ENCODE measurements at regions of chr1 and their contacts with region 1.

Region 1: GRCh38 chr1:153478692-153479618 is 18.5 kb upstream of the S100A7 start:
- DNase-seq: no peak
- ATAC-seq: no peak
- H3K4me3 ChIP-seq: no peak overlapping the region
- H3K4me3 Mint-ChIP-seq: no peak overlapping the region
- H3K27ac ChIP-seq: no peak overlapping the region
- H3K27ac Mint-ChIP-seq: no peak overlapping the region
- H3K4me1 ChIP-seq: no peaks in the 10 kb centered on the region
- H3K4me1 Mint-ChIP-seq: no peaks in the 10 kb centered on the region
- H3K27me3 ChIP-seq: no peaks in the 10 kb centered on the region
- H3K27me3 Mint-ChIP-seq: peaks cover 30% of the 10 kb centered on the region
- CTCF ChIP-seq: no peak

Region 2: DNA sequence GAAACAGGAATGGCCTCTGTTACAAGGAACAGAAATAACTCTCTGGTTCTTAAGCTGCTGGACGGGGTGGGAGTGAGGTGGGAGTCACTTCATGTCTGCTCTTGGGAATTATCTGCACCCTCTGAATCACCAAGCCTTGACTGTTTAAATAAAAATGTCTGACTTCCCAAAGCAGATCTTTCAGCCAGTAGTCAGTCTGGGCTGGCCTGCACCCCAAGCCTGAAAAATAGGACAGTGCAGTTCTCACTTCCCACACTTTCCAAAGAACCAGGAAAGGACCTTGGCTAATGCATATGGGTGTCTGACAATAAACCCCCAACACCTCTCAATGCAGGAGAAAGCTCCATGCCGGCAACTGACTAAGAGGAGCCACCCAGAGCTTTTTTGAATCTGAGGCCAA is 19.3 kb before region 1 on chr1:
- CTCF ChIA-PET with region 1: no interaction called
- POLR2A ChIA-PET with region 1: no interaction called
- intact Hi-C with region 1: no loop called
- DNase-seq: no peak
- ATAC-seq: no peak
- H3K4me3 ChIP-seq: no peak overlapping the region
- H3K4me3 Mint-ChIP-seq: no peak overlapping the region
- H3K27ac ChIP-seq: no peak overlapping the region
- H3K27ac Mint-ChIP-seq: no peak overlapping the region
- H3K4me1 ChIP-seq: no peaks in the 10 kb centered on the region
- H3K4me1 Mint-ChIP-seq: no peaks in the 10 kb centered on the region
- H3K27me3 ChIP-seq: no peaks in the 10 kb centered on the region
- H3K27me3 Mint-ChIP-seq: peaks cover 39% of the 10 kb centered on the region
- CTCF ChIP-seq: no peak

Region 3: GRCh38 chr1:153494976-153495535 is 16.1 kb after region 1 on chr1:
- CTCF ChIA-PET with region 1: interaction called, 36 read pairs
- POLR2A ChIA-PET with region 1: no interaction called
- intact Hi-C with region 1: no loop called
- DNase-seq: peak; percentile 46 to 81 (median 72)
- ATAC-seq: peak; percentile 68
- H3K4me3 ChIP-seq: no peak overlapping the region
- H3K4me3 Mint-ChIP-seq: no peak overlapping the region
- H3K27ac ChIP-seq: no peak overlapping the region
- H3K27ac Mint-ChIP-seq: no peak overlapping the region
- H3K4me1 ChIP-seq: no peaks in the 10 kb centered on the region
- H3K4me1 Mint-ChIP-seq: no peaks in the 10 kb centered on the region
- H3K27me3 ChIP-seq: peaks cover 4 to 5% of the 10 kb centered on the region in 2 experiments
- H3K27me3 Mint-ChIP-seq: peaks cover 28% of the 10 kb centered on the region
- CTCF ChIP-seq: peak; percentile 91

Region 4: DNA sequence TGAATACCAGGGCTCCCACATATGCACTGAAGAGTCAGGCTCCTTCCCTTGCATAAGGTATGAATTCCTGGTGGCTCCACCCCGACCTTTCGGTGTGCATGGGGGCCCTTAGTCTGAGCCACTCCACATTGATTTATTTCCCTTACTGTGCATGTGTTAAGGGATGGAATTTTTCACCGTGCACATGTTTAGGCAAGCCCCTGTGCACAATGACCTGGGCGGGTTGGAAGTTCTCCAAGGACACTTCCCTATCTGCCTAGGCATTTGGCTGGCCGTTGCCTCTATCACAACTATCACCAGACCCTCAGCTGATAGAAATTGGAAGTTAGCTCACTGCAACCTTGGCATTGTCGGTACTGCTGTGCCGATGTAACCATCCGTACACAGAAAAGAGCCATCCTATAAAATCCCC is 47.2 kb after region 1 on chr1:
- CTCF ChIA-PET with region 1: no interaction called
- POLR2A ChIA-PET with region 1: no interaction called
- intact Hi-C with region 1: no loop called
- DNase-seq: no peak
- ATAC-seq: no peak
- H3K4me3 ChIP-seq: no peak overlapping the region
- H3K4me3 Mint-ChIP-seq: no peak overlapping the region
- H3K27ac ChIP-seq: no peak overlapping the region
- H3K27ac Mint-ChIP-seq: no peak overlapping the region
- H3K4me1 ChIP-seq: peaks cover 5% of the 10 kb centered on the region
- H3K4me1 Mint-ChIP-seq: peaks cover 8% of the 10 kb centered on the region
- H3K27me3 ChIP-seq: no peaks in the 10 kb centered on the region
- H3K27me3 Mint-ChIP-seq: no peaks in the 10 kb centered on the region
- CTCF ChIP-seq: no peak

Region 5: GRCh38 chr1:153742411-153743142 is 263.6 kb after region 1 on chr1:
- CTCF ChIA-PET with region 1: no interaction called
- POLR2A ChIA-PET with region 1: no interaction called
- intact Hi-C with region 1: no loop called
- DNase-seq: no peak
- ATAC-seq: no peak
- H3K4me3 ChIP-seq: no peak overlapping the region
- H3K4me3 Mint-ChIP-seq: no peak overlapping the region
- H3K27ac ChIP-seq: no peak overlapping the region
- H3K27ac Mint-ChIP-seq: peak overlapping the region; percentile 4
- H3K4me1 ChIP-seq: no peaks in the 10 kb centered on the region
- H3K4me1 Mint-ChIP-seq: peaks cover 6% of the 10 kb centered on the region
- H3K27me3 ChIP-seq: no peaks in the 10 kb centered on the region
- H3K27me3 Mint-ChIP-seq: no peaks in the 10 kb centered on the region
- CTCF ChIP-seq: no peak

Measured in CD8-positive, alpha-beta T cell (primary cell).